Gastrocnemius medialis (tissue), 4 donors: ENCODE measurements at regions of chr10 and their contacts with region 1.

Region 1: GRCh38 chr10:3785257-3785850 is 345 bp upstream of the KLF6 start:
- DNase-seq: peak; percentile 99
- ATAC-seq: peak; percentile 55 to 62
- H3K4me3 ChIP-seq: peak overlapping the region; percentile 83 to 94 (median 90)
- H3K27ac ChIP-seq: peak overlapping the region; percentile 97 to 100 (median 100)
- H3K4me1 ChIP-seq: peaks cover 11 to 18% of the 10 kb centered on the region in 2 donors
- H3K27me3 ChIP-seq: no peaks in the 10 kb centered on the region
- CTCF ChIP-seq: peak in 2 of 5 experiments; percentile 14 to 34
- POLR2A ChIP-seq: peak; percentile 100

Region 2: DNA sequence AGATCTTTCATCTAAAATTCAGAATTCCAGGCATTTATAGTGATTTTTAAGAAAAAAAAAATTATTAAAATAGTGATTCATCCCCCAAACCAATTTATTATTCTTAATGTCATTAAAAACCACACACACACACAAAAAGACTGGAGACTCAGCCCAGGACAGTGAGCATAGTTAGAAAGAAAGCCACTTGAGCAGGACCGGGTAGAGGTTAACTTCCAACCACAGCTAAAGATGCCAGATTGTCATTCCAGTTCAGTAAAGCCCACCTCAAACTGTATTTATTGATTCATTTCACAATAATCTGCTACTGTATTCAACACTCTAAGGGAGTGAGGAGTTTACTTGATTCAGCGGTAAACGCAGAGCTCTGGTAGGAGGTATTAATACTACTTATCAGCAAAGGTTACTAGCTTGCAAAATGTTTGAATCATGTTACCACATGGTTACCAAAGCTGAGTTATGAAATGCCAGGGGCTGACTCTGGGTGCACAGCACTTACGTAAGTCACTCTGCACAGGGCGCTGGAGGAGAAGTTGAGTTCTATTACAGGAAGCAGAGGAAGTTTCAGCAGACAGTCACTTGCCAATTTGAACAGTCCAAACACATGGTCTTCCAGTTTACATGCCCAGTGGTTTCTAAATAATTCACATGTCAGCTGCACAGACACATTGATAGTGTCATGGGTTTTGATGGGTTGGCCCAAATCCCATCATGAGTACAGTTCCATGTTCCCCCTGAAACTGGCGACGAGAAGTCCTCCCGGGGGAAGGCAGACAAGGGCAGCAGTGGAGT is 64.9 kb before region 1 on chr10:
- in situ Hi-C with region 1: no loop called
- intact Hi-C with region 1: loop called (anchors 2 kb)
- DNase-seq: peak; percentile 84 to 91
- ATAC-seq: peak; percentile 96 to 97
- H3K4me3 ChIP-seq: no peak overlapping the region
- H3K27ac ChIP-seq: peak overlapping the region; percentile 59 to 86 (median 78)
- H3K4me1 ChIP-seq: peaks cover 5% of the 10 kb centered on the region in 2 donors
- H3K27me3 ChIP-seq: no peaks in the 10 kb centered on the region
- CTCF ChIP-seq: no peak
- POLR2A ChIP-seq: peak; percentile 27 to 57

Region 3: GRCh38 chr10:3800586-3800985 is 15.2 kb after region 1 on chr10:
- in situ Hi-C with region 1: no loop called
- intact Hi-C with region 1: loop called (anchors 1 kb)
- DNase-seq: no peak
- ATAC-seq: no peak
- H3K4me3 ChIP-seq: no peak overlapping the region
- H3K27ac ChIP-seq: peak overlapping the region in 2 of 4 donors; percentile 11 to 96
- H3K4me1 ChIP-seq: peaks cover 29% of the 10 kb centered on the region in 2 donors
- H3K27me3 ChIP-seq: no peaks in the 10 kb centered on the region
- CTCF ChIP-seq: no peak
- POLR2A ChIP-seq: no peak

Region 4: GRCh38 chr10:3811291-3811870 is 26.0 kb after region 1 on chr10:
- in situ Hi-C with region 1: no loop called
- intact Hi-C with region 1: loop called (anchors 1 kb)
- DNase-seq: peak in 1 of 2 donors; percentile 61
- ATAC-seq: peak; percentile 33 to 58
- H3K4me3 ChIP-seq: peak overlapping the region in 3 of 4 donors; percentile 17 to 26 (median 18)
- H3K27ac ChIP-seq: peak overlapping the region; percentile 85 to 96 (median 90)
- H3K4me1 ChIP-seq: peaks cover 45 to 46% of the 10 kb centered on the region in 2 donors
- H3K27me3 ChIP-seq: no peaks in the 10 kb centered on the region
- CTCF ChIP-seq: no peak
- POLR2A ChIP-seq: peak in 1 of 2 donors; percentile 42

Region 5: DNA sequence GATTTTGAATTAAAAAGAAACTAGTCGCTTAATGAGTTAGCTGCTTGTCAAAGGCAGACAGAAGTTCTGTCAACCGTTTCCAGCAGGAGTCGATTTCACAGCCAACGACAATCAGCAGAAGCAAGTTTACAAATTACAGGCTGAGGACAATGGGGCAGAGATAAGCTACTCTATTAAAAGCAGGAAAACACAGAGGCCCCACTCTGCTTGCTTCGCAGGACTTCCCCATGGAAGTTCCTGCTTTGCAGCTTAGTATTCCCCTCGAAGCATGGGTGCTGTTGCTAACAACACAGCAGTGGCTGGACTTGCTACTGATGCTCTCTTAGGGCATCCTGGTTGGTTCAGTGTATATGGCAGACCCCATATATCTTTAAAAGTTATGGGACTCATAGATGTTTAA is 50.4 kb after region 1 on chr10:
- in situ Hi-C with region 1: no loop called
- intact Hi-C with region 1: no loop called
- DNase-seq: no peak
- ATAC-seq: peak; percentile 36 to 68
- H3K4me3 ChIP-seq: no peak overlapping the region
- H3K27ac ChIP-seq: peak overlapping the region in 2 of 4 donors; percentile 17 to 23
- H3K4me1 ChIP-seq: peaks cover 6 to 10% of the 10 kb centered on the region in 2 donors
- H3K27me3 ChIP-seq: no peaks in the 10 kb centered on the region
- CTCF ChIP-seq: no peak
- POLR2A ChIP-seq: no peak

Region 6: GRCh38 chr10:3887885-3888476 is 102.6 kb after region 1 on chr10:
- in situ Hi-C with region 1: no loop called
- intact Hi-C with region 1: loop called (anchors 2 kb)
- DNase-seq: peak; percentile 24 to 32
- ATAC-seq: peak; percentile 43 to 58
- H3K4me3 ChIP-seq: no peak overlapping the region
- H3K27ac ChIP-seq: peak overlapping the region; percentile 72 to 82 (median 78)
- H3K4me1 ChIP-seq: peaks cover 16 to 21% of the 10 kb centered on the region in 2 donors
- H3K27me3 ChIP-seq: no peaks in the 10 kb centered on the region
- CTCF ChIP-seq: no peak
- POLR2A ChIP-seq: no peak

Region 7: GRCh38 chr10:4241724-4242345 is 456.5 kb after region 1 on chr10:
- in situ Hi-C with region 1: no loop called
- intact Hi-C with region 1: loop called (anchors 10 kb)
- DNase-seq: no peak
- ATAC-seq: peak; percentile 35 to 46
- H3K4me3 ChIP-seq: peak overlapping the region; percentile 10 to 50 (median 41)
- H3K27ac ChIP-seq: peak overlapping the region; percentile 69 to 83 (median 76)
- H3K4me1 ChIP-seq: peaks cover 11 to 33% of the 10 kb centered on the region in 2 donors
- H3K27me3 ChIP-seq: no peaks in the 10 kb centered on the region
- CTCF ChIP-seq: no peak
- POLR2A ChIP-seq: peak in 1 of 2 donors; percentile 8